Heart right ventricle (tissue), 16 donors: ENCODE measurements at regions of chr17 and their contacts with region 1.

Region 1: GRCh38 chr17:45936610-45937009 is 42.3 kb downstream of the MAPT start:
- DNase-seq: no peak
- ATAC-seq: no peak
- H3K4me3 ChIP-seq: no peak overlapping the region
- H3K27ac ChIP-seq: no peak overlapping the region
- H3K4me1 ChIP-seq: peaks cover 0 to 14% (median 7%) of the 10 kb centered on the region in 9 donors
- H3K27me3 ChIP-seq: no peaks in the 10 kb centered on the region
- CTCF ChIP-seq: no peak

Region 2: GRCh38 chr17:44033861-44034408 is 1902.7 kb before region 1 on chr17:
- intact Hi-C with region 1: no loop called
- DNase-seq: no peak
- ATAC-seq: peak in 1 of 8 donors; percentile 34
- H3K4me3 ChIP-seq: no peak overlapping the region
- H3K27ac ChIP-seq: peak overlapping the region in 1 of 10 donors; percentile 3
- H3K4me1 ChIP-seq: peaks cover 0 to 26% (median 6%) of the 10 kb centered on the region in 9 donors
- H3K27me3 ChIP-seq: no peaks in the 10 kb centered on the region
- CTCF ChIP-seq: no peak

Region 3: GRCh38 chr17:45867702-45868101 is 68.9 kb before region 1 on chr17:
- intact Hi-C with region 1: loop called in 1 of 10 experiments (anchors 10 kb)
- DNase-seq: no peak
- ATAC-seq: no peak
- H3K4me3 ChIP-seq: no peak overlapping the region
- H3K27ac ChIP-seq: no peak overlapping the region
- H3K4me1 ChIP-seq: no peaks in the 10 kb centered on the region
- H3K27me3 ChIP-seq: peaks cover 0 to 49% (median 39%) of the 10 kb centered on the region in 7 donors
- CTCF ChIP-seq: no peak